Breast epithelium (tissue), 4 donors: ENCODE measurements at regions of chr2 and their contacts with region 1.

Region 1: GRCh38 chr2:43950383-43951008 is 45.3 kb downstream of the LRPPRC start:
- DNase-seq: no peak
- H3K4me3 ChIP-seq: no peak overlapping the region
- H3K27ac ChIP-seq: no peak overlapping the region
- H3K4me1 ChIP-seq: no peaks in the 10 kb centered on the region
- H3K27me3 ChIP-seq: no peaks in the 10 kb centered on the region
- CTCF ChIP-seq: peak in 2 of 3 donors; percentile 21 to 38
- POLR2A ChIP-seq: no peak

Region 2: DNA sequence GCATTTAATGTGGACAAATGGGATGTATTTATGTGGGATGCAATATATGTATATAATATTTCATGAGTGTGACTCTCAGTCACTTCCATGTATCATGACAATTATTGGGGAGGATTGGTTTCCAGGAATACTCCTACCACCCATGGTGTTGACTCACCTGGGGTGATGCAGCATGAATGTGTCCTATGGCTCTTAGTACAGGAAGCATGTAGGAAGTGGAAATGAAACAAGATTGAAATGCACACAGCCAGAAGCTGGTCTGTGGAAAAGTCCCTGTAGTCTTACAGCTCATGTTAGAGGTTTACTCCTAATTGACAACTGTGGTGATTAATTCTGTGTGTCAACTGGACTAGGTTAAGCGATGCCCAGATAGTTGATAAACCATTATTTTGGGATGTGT is 1068.8 kb before region 1 on chr2:
- intact Hi-C with region 1: no loop called
- DNase-seq: no peak
- H3K4me3 ChIP-seq: no peak overlapping the region
- H3K27ac ChIP-seq: peak overlapping the region in 1 of 2 donors; percentile 85
- H3K4me1 ChIP-seq: peaks cover 0 to 7% of the 10 kb centered on the region in 2 donors
- H3K27me3 ChIP-seq: no peaks in the 10 kb centered on the region
- CTCF ChIP-seq: no peak
- POLR2A ChIP-seq: no peak

Region 3: DNA sequence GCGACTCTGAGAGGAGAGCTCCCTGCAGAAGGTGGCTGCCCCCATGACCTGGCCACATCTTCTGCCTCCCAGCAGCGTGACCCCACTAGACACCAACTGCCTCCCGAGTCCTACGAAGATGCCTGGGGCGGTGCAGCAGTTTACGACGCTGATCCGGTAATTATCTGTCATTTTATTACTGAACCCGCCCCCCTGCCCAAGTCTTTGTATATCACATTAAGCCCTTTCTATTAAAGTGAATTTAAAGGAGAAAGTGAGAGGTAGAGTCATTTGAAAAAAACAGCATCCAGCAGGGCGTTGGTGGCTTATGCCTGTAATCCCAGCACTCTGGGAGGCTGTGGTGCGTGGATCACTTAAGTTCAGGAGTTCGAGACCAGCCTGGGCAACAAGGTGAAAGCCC is 78.3 kb before region 1 on chr2:
- intact Hi-C with region 1: no loop called
- DNase-seq: no peak
- H3K4me3 ChIP-seq: no peak overlapping the region
- H3K27ac ChIP-seq: no peak overlapping the region
- H3K4me1 ChIP-seq: no peaks in the 10 kb centered on the region
- H3K27me3 ChIP-seq: peaks cover 0 to 4% of the 10 kb centered on the region in 2 donors
- CTCF ChIP-seq: no peak
- POLR2A ChIP-seq: no peak

Region 4: DNA sequence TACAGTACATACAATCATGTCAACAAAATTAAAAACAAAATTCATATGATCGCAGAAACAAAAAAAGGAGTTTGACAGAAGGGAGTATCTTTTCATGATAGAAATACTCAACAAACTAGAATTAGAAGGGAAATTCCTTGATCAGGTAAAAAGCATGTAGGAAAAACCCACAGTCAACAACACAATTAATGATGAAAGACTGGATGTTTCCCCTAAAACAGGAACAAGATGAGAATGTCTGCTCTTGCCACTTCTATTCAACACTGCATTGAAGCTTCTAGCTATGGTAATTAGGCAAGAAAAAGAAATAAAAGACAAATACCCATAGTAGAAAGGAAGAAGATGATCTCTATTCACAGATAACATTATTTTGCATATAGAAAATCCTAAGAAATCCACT is 1573.5 kb after region 1 on chr2:
- intact Hi-C with region 1: loop called (anchors 10 kb)
- DNase-seq: no peak
- H3K4me3 ChIP-seq: no peak overlapping the region
- H3K27ac ChIP-seq: no peak overlapping the region
- H3K4me1 ChIP-seq: no peaks in the 10 kb centered on the region
- H3K27me3 ChIP-seq: no peaks in the 10 kb centered on the region
- CTCF ChIP-seq: no peak
- POLR2A ChIP-seq: no peak